HCT116 (cell line): ENCODE measurements at regions of chr1 and their contacts with region 1.

Region 1: DNA sequence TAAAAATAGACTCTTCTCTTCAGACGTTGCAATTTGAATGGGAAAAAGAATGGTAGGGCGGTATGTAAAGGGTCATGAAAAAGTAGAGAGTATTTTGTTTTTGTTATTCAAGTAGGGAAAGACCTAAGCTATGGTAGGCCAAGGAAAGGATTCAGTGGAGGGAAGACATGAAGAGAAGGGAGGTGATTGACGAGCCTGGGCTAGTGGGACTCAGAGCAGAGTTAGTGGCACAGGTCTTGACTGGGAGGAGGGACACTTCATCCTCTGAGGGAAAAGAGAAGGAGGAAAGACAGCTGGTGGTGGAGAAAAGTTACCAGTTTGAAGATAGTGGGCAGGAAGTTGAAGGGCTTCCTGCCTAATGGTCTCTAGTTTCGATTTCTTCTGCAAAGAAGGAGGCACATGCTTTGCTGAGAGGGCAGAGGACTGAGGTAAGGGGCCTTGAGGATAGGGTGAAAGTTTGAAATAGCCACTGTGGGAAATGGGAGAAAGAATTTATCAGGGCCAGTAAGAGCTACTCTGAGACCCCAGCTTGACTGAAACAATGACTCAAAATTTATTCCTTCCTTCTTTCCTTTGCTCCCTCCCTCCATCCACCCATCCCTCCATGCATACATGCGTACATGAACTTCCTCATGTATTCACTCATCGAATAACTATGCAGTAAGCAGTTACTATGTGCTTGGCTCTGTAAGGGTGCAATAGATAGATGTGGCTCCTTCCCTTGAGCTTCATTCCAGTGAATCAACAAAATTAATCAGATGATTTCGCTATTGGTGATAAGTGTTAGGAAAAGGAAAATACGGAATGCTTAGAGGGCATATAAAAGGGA is 4.2 kb downstream of the CD48 start:
- DNase-seq: no peak
- ATAC-seq: no peak
- H3K4me3 ChIP-seq: no peak overlapping the region
- H3K27ac ChIP-seq: no peak overlapping the region
- H3K4me1 ChIP-seq: no peaks in the 10 kb centered on the region
- H3K27me3 ChIP-seq: no peaks in the 10 kb centered on the region; the same call in 1 of the 2 replicates
- CTCF ChIP-seq: no peak
- POLR2A ChIP-seq: no peak
- RAD21 ChIP-seq: no peak

Region 2: GRCh38 chr1:160722726-160723125 is 15.3 kb after region 1 on chr1:
- CTCF ChIA-PET with region 1: no interaction called
- POLR2A ChIA-PET with region 1: no interaction called
- RAD21 ChIA-PET with region 1: no interaction called
- intact Hi-C with region 1: no loop called
- DNase-seq: no peak
- ATAC-seq: no peak
- H3K4me3 ChIP-seq: no peak overlapping the region
- H3K27ac ChIP-seq: no peak overlapping the region
- H3K4me1 ChIP-seq: peaks cover 6 to 14% of the 10 kb centered on the region in 2 experiments; a peak in 3 of 4 replicates
- H3K27me3 ChIP-seq: no peaks in the 10 kb centered on the region
- CTCF ChIP-seq: no peak
- POLR2A ChIP-seq: no peak
- RAD21 ChIP-seq: no peak

Region 3: DNA sequence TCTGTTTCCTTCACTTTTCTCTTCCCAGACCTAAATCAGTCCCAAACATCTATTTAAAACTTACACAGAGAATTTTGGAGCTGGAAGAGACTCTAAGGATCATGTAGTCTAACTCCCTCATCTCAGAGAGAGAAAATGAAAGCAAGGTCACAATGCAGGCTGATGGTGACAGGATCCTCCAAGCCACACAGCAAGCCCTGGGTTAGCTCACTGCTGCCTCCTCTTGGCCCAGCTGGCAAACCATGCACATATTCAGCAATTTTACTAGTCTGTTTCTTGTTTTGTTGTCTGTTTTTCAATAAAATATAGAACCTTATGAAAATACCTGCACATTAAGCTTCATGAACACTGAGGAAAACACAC is 60.8 kb after region 1 on chr1:
- CTCF ChIA-PET with region 1: no interaction called
- POLR2A ChIA-PET with region 1: no interaction called
- RAD21 ChIA-PET with region 1: no interaction called
- intact Hi-C with region 1: loop called (anchors 2 kb)
- DNase-seq: no peak
- ATAC-seq: peak; percentile 81
- H3K4me3 ChIP-seq: no peak overlapping the region
- H3K27ac ChIP-seq: no peak overlapping the region
- H3K4me1 ChIP-seq: no peaks in the 10 kb centered on the region
- H3K27me3 ChIP-seq: no peaks in the 10 kb centered on the region
- CTCF ChIP-seq: peak; percentile 34 to 67 (median 49); a peak in 5 of 6 replicates
- POLR2A ChIP-seq: no peak
- RAD21 ChIP-seq: peak; percentile 44